Activated CD4-positive, alpha-beta memory T cell treated with anti-CD3 and anti-CD28 coated beads for 36 hours (primary cell): ENCODE measurements at regions of chr1 and their contacts with region 1.

Region 1: DNA sequence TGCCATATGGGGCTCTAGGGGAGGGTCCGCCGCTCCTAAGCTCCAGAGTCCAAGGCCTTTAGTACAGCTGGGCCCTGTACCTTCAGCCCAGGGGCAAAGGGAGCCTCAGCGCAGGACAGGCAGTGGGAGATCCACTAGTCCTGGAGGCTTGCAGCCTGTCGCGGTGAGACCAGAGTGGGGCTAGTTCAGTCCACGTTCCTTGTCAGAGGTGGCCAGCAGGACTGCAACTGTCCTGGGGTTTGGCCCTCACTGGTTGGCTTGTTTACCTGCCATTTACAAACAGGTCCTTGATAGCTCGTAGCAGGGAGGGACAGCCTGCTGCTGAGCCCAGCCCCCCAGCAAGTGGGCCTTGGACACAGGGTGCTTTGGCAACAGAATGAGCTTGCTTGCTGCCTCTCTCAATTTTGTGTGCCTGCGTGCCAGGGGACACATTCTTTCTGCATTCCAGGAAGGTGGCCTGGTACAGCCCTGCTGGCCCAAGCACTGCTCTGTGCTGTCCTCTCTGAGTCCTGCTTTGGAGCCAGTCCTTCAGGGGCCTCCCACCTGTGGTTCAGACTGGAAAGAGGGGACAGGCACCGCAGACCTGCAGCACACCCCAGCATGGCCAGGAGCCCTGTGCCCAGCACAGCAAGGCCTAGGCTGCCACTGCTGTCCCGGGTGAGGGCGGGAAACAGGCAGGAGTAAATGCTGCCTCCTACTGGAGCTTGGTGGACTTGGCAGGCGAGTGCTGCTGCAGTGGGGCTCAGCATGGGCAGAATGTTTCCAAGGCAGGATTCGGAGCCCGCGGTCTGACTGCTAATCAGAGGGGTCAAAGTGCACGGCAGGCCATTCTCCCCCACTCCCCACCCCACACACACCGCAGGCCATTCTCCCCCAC is 15.2 kb downstream of the H6PD start:
- DNase-seq: peak; percentile 59
- H3K4me3 Mint-ChIP-seq: no peak overlapping the region
- H3K27ac Mint-ChIP-seq: no peak overlapping the region
- H3K4me1 Mint-ChIP-seq: peaks cover 2% of the 10 kb centered on the region
- H3K27me3 Mint-ChIP-seq: no peaks in the 10 kb centered on the region

Region 2: GRCh38 chr1:8497210-8497801 is 752.5 kb before region 1 on chr1:
- CTCF ChIA-PET with region 1: no interaction called
- POLR2A ChIA-PET with region 1: no interaction called
- intact Hi-C with region 1: no loop called
- DNase-seq: no peak
- H3K4me3 Mint-ChIP-seq: no peak overlapping the region
- H3K27ac Mint-ChIP-seq: no peak overlapping the region
- H3K4me1 Mint-ChIP-seq: peaks cover 24% of the 10 kb centered on the region
- H3K27me3 Mint-ChIP-seq: no peaks in the 10 kb centered on the region

Region 3: GRCh38 chr1:9145021-9145668 is 104.6 kb before region 1 on chr1:
- CTCF ChIA-PET with region 1: interaction called, 16 read pairs
- POLR2A ChIA-PET with region 1: no interaction called
- intact Hi-C with region 1: no loop called
- DNase-seq: peak; percentile 68
- H3K4me3 Mint-ChIP-seq: no peak overlapping the region
- H3K27ac Mint-ChIP-seq: no peak overlapping the region
- H3K4me1 Mint-ChIP-seq: peaks cover 4% of the 10 kb centered on the region
- H3K27me3 Mint-ChIP-seq: no peaks in the 10 kb centered on the region